ENCODE measurements at regions of chr3 and their contacts with region 1.

Region 1: DNA sequence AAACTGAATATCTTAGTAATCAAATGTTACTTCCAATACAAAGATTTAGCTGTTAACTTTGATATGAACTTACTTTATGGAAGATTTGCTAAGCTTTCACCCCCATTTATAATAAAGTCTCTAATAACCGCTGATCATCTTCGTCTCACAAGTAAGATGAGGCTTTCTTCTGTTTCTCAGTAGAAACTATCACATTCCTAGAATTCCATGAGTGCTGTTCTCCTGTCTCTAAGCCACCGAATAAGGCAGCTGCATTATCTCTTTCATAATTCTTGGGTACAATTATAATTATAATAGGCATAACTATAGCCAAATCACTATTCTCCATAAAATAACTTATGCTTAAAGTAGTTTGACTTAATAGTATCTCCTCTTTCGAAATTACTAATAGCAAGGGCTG is 18.3 kb upstream of the SETMAR start:
- DNase-seq: no peak
- H3K4me3 ChIP-seq: no peak overlapping the region
- H3K27ac ChIP-seq: no peak overlapping the region
- H3K4me1 ChIP-seq: no peaks in the 10 kb centered on the region
- H3K27me3 ChIP-seq: no peaks in the 10 kb centered on the region
- CTCF ChIP-seq: no peak
- POLR2A ChIP-seq: no peak

Region 2: DNA sequence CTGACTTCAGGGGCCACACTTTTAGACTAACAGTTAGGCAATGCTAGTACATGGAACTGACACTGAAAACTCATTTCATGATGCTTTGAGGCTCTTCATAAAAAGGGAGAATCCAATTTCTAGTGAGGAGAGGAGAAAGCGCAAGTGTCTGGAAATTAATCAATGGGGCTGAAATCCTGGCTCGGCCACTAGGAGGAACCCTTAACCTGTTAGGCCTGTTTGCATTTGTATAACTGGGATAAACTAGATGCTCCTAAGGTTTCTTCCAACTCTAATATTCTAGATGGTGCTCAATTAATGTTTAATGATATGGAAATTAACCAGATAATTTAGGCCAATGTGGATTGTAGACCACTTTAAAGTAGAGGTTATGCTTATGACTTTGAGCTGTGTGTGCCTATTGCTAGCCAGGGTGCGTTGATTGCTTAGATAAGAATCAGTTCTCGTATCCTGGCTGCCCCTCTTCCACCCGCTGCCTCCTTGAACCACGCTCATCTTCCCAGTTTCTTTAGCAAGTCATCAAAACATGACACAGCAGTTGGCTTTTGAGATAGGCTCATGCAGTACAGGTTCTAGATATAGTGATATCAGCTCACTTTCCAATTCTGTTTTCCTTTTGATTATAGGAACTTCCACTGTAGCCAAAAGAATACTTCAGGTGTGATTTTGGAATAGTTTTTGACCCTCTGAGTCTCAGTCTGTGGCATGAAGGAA is 1088.6 kb before region 1 on chr3:
- intact Hi-C with region 1: loop called (anchors 10 kb)
- DNase-seq: peak; percentile 50
- H3K4me3 ChIP-seq: no peak overlapping the region
- H3K27ac ChIP-seq: no peak overlapping the region
- H3K4me1 ChIP-seq: no peaks in the 10 kb centered on the region
- H3K27me3 ChIP-seq: no peaks in the 10 kb centered on the region
- CTCF ChIP-seq: peak; percentile 37 to 58 (median 55)
- POLR2A ChIP-seq: no peak

Region 3: GRCh38 chr3:4078903-4079302 is 206.0 kb before region 1 on chr3:
- intact Hi-C with region 1: no loop called
- DNase-seq: no peak
- H3K4me3 ChIP-seq: no peak overlapping the region
- H3K27ac ChIP-seq: no peak overlapping the region
- H3K4me1 ChIP-seq: no peaks in the 10 kb centered on the region
- H3K27me3 ChIP-seq: no peaks in the 10 kb centered on the region
- CTCF ChIP-seq: no peak
- POLR2A ChIP-seq: no peak

Region 4: DNA sequence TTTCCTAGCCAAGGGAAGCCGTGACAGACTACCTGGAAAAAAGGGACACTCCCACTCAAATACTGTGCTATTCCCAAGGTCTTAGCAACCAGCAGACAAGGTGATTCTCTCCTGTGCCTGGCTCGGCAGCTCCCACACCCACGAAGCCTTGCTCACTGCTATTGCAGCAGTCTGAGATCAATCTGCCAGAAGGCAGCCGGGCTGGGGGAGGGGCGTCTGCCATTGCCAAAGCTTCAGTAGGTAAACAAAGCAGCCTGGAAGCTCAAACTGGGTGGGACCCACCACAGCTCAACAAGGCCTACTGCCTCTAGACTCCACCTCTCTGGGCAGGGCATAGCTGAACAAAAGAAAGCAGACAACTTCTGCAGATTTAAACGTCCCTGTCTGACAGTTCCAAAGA is 110.1 kb before region 1 on chr3:
- intact Hi-C with region 1: no loop called
- DNase-seq: no peak
- H3K4me3 ChIP-seq: no peak overlapping the region
- H3K27ac ChIP-seq: no peak overlapping the region
- H3K4me1 ChIP-seq: no peaks in the 10 kb centered on the region
- H3K27me3 ChIP-seq: no peaks in the 10 kb centered on the region
- CTCF ChIP-seq: no peak
- POLR2A ChIP-seq: no peak

Region 5: DNA sequence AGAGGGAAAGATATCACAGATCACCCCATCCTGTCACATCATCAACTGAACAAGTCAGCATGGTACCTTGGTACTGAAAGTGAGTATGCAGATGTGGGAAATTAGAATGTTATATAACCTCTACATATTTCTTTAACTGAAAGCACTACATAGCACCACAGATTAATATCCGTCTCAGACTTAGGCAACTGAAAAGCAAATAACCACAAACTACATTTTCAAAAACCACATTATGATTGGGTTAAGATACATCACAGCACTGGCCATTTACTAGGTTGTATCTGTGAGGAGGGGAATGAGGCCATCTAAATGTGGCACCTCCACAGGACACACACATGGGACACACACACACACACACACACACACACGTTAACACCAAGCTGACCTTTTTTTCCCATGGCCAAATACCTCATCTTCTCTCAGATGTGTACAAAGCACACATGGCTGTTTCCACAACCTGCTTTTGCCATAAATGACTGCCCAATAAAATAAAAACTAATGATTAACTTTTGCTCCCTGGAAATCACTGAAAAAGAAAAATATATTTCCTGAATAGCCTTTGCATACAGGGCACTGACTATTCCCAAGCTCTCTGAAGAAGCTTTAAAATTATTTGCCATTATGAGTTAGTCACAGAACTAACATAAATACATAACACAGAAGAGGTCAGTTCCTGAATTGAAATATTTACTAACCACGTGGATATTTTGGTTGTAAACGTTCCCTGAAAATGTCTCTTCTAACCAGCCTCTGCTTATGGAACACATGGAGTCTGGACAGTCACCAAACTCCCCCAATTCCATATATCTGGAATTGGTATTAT is 122.1 kb after region 1 on chr3:
- intact Hi-C with region 1: no loop called
- DNase-seq: no peak
- H3K4me3 ChIP-seq: no peak overlapping the region
- H3K27ac ChIP-seq: no peak overlapping the region
- H3K4me1 ChIP-seq: no peaks in the 10 kb centered on the region
- H3K27me3 ChIP-seq: no peaks in the 10 kb centered on the region
- CTCF ChIP-seq: no peak
- POLR2A ChIP-seq: no peak

Measured in testis (tissue), 5 donors.